ENCODE measurements at regions of chr5 and their contacts with region 1.

Region 1: DNA sequence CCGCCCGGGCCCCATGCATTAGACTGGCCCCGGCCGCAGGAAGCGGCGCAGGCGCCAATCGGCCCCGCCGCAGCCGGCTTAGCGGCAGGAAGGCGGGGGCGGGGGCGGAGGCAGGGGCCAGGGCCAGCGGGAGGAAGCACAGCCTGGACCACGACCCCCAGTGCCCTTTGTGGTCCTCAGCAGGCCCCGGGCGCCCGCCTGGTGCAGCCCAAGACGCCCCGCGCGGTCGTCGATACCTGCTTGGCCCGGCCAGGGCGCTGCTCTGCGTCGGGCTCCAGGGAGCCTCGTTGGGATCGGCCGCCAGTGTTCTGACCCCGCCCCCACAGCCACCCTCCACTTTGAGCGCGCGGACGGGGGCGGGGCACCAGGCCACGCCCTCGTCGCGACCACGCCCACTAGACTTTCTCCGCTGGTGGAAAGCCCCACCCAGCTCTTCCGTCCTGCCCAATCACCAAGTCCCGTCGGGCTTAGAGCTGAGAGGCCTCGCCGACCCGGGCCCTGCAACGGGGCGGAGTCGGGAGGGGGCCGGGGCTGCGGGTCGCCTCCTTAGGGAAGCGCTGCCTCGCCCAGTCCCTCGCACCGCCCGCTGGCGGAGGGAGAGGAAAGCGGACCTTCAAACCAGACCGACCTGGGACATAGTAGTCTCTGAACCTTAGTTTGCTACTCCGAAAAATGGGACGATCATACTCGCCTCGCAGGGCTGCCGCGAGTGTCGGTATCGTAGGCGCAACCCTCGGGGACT is at the start of gene PDLIM7:
- DNase-seq: peak; percentile 96
- H3K4me3 ChIP-seq: peak within 1 kb of the TSS; percentile 51
- H3K27ac ChIP-seq: peak within 1 kb of the TSS; percentile 79
- H3K4me1 ChIP-seq: peaks cover 10% of the 10 kb centered on the region
- H3K27me3 ChIP-seq: no peaks in the 10 kb centered on the region
- CTCF ChIP-seq: no peak
- total RNA-seq, gene PDLIM7: 19.7 to 44.9 TPM

Region 2: DNA sequence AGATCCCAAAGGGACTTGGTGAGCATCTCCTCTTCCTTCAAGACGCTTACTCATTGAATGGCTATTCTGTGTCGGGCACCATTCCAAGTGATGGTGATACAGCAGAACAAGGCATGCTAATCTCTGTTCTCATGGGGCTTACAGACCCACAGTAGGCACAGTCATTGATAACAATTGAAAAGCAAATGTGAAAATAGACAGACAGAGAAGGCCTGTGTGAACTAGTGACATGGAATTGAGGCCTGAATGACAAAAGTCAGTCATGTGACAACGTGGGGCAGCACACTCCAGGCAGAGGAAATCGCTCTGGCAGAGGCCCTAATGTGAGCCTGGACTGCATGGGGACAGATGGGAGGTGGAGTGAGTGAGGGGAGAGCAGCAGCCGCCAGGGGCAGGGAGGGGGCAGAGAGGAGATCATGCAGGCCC is 1696.8 kb before region 1 on chr5:
- intact Hi-C with region 1: no loop called
- DNase-seq: no peak
- H3K4me3 ChIP-seq: no peak overlapping the region
- H3K27ac ChIP-seq: no peak overlapping the region
- H3K4me1 ChIP-seq: no peaks in the 10 kb centered on the region
- H3K27me3 ChIP-seq: peaks cover 27% of the 10 kb centered on the region
- CTCF ChIP-seq: no peak

Region 3: DNA sequence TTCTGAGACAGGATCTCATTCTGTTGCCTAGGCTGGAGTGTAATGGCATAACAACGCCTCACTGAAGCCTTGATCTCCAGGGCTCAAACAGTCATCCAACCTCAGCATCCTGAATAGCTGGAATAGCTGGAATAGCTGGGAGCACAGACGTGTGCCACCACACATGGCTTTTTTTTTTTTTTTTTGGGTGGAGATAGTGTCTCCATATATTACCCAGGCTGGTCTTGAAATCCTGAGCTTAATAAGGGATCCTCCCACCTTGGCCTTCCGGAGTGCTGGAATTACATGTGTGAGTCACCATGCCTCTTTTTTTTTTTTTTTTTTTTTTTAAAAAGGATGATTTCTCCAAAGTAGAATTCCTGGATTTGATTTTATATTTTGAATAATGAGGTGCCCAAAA is 303.2 kb before region 1 on chr5:
- intact Hi-C with region 1: no loop called
- DNase-seq: no peak
- H3K4me3 ChIP-seq: no peak overlapping the region
- H3K27ac ChIP-seq: no peak overlapping the region
- H3K4me1 ChIP-seq: no peaks in the 10 kb centered on the region
- H3K27me3 ChIP-seq: no peaks in the 10 kb centered on the region
- CTCF ChIP-seq: no peak

Region 4: GRCh38 chr5:177311723-177312648 is 185.5 kb before region 1 on chr5 and contains the start of gene MXD3:
- intact Hi-C with region 1: loop called (anchors 5 kb)
- DNase-seq: peak; percentile 97
- H3K4me3 ChIP-seq: peak within 1 kb of the TSS; percentile 56
- H3K27ac ChIP-seq: peak within 1 kb of the TSS; percentile 41
- H3K4me1 ChIP-seq: peaks cover 32% of the 10 kb centered on the region
- H3K27me3 ChIP-seq: no peaks in the 10 kb centered on the region
- CTCF ChIP-seq: no peak
- total RNA-seq, gene MXD3: 9.3 to 36.4 TPM

Region 5: DNA sequence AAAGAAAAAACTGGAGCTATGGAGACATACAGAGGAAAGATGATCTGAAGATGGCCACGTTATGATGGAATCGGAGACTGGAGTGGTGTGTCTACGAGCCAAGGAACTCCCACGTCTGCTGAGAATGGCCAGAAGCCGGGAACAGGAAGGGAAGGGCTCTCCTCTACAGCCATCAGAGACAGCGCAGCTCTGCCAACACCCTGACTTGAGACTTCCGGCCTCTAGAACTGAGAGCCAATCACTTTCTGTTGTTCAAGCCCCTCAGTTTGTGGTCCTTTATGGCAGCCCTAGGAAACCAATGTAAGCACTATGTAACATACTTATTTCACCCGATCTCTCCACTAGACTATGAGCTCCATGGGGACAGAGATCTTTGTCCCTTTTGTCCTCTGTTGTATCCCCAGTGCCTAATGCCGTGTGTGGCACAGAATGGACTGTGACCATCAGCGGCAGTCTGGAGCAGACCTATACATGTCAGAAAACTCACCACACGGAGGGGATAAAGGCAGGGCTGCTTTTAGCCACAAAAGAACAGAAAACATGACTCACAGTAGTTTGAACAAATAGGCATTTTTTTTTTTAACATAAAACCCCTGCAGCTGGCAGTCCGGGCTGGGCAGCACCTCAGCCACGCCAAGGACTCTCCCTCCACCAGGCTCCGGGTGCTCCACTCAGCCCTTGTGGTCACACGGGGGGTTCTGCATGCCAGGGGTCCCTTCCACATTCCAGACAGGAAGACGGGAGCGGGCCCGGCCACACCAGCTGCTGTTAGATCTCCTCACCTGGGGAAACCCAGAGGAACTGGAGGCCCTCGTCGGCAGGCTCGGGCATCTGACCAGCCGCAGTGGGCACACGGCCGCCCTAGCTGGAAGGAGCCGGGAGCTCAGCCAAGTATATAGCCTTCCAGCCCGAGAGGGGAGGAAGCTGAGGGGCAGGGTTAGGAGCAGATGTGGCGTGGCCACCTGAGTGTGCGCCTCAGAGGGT is 169.6 kb before region 1 on chr5:
- intact Hi-C with region 1: no loop called
- DNase-seq: no peak
- H3K4me3 ChIP-seq: no peak overlapping the region
- H3K27ac ChIP-seq: no peak overlapping the region
- H3K4me1 ChIP-seq: no peaks in the 10 kb centered on the region
- H3K27me3 ChIP-seq: no peaks in the 10 kb centered on the region
- CTCF ChIP-seq: no peak

Region 6: DNA sequence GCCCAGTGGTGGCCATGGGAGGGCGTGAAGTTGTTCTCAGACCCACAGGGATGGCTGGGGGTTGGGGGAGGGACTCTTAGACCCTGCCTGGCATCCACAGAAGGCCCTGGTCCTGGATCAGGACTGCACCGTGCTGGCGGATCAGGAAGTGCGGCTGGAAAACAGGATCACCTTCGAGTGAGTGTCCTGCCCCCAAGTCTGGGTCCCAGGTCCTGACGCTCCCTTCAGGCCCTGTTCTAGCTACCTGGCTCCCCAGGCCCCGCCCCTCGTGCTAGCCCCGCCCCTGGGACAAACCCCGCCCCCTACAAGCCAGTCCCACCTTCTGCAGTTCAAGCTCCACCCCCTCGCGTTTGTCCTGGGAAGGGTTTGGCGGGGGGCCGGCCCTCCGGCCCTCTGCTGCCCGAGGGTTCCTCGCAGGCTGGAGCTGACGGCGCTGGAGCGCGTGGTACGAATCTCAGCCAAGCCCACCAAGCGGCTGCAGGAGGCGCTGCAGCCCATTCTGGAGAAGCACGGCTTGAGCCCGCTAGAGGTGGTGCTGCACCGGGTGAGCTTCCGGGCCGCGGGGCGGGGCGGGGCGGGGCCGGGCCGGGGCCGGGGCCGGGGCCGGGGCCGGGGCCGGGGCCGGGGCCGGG is 126.9 kb before region 1 on chr5:
- intact Hi-C with region 1: no loop called
- DNase-seq: peak; percentile 91
- H3K4me3 ChIP-seq: peak overlapping the region; percentile 31
- H3K27ac ChIP-seq: no peak overlapping the region
- H3K4me1 ChIP-seq: peaks cover 10% of the 10 kb centered on the region
- H3K27me3 ChIP-seq: no peaks in the 10 kb centered on the region
- CTCF ChIP-seq: no peak

Region 7: DNA sequence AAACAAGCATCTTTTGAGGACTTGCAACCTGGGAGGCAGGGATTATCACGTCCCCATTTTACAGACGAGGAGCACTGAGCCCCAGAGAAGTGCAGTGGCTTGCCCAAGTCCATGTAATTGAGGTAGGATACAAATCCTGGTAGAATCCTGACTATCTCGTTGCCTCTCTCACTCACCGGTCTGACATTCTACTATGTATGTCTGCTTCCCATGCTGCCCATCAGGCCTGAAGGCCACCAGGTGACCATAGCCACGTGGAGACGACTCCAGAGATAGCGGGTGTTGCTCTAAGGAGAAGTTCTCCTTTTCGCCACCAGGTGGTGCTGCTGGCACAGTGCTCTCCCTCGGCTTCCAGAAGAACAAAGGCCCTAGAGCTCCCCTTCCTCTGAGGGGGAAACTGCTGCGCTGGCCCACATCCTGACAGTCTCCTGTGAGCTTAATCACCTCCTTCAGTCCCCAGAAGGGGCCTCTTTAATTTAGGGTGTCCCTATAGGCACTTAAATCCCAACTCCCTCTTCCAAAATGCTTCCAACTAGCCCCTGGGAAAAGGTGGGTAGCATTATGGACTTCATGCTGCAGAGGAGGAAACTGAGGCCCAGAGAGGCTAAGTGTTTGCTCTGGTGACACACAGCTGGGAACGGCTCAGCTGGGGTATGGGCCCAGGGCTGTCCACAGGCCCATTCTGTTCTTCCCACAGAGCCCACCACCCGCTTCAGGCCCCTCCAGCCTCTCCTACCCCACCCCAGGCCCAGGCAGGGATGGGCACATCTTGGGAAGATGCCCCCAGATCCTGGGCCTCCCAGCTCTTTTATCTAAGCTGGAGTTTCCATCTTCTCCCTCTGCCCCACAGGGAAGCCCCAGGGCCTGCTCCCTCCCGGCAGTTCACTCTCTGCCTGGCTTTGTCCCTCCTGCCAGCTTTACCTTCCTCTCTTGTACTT is 106.8 kb before region 1 on chr5:
- intact Hi-C with region 1: loop called (anchors 5 kb)
- DNase-seq: peak; percentile 90
- H3K4me3 ChIP-seq: no peak overlapping the region
- H3K27ac ChIP-seq: peak overlapping the region; percentile 11
- H3K4me1 ChIP-seq: peaks cover 9% of the 10 kb centered on the region
- H3K27me3 ChIP-seq: no peaks in the 10 kb centered on the region
- CTCF ChIP-seq: peak; percentile 99

Region 8: DNA sequence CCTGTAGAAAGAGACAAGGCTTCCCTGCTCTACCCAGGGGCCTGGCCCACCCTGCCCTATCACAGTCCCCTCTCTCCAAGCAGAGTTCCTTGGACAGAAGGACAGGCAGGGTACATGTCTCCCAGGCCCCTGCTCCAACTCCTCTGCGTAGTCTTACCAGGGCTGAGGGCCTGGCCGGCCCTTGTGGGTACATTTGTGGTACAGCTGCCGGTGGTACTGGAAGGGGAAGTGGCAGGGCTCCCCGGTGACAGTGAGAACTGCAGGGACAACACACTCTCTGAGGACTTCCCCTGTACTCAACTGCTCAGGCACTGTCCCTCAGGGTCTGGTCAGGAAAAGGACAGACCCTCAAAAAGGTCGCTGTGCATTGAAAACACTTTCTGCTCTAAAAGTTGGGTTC is 91.7 kb before region 1 on chr5:
- intact Hi-C with region 1: loop called (anchors 5 kb)
- DNase-seq: no peak
- H3K4me3 ChIP-seq: no peak overlapping the region
- H3K27ac ChIP-seq: no peak overlapping the region
- H3K4me1 ChIP-seq: peaks cover 23% of the 10 kb centered on the region
- H3K27me3 ChIP-seq: peaks cover 5% of the 10 kb centered on the region
- CTCF ChIP-seq: no peak

Region 9: DNA sequence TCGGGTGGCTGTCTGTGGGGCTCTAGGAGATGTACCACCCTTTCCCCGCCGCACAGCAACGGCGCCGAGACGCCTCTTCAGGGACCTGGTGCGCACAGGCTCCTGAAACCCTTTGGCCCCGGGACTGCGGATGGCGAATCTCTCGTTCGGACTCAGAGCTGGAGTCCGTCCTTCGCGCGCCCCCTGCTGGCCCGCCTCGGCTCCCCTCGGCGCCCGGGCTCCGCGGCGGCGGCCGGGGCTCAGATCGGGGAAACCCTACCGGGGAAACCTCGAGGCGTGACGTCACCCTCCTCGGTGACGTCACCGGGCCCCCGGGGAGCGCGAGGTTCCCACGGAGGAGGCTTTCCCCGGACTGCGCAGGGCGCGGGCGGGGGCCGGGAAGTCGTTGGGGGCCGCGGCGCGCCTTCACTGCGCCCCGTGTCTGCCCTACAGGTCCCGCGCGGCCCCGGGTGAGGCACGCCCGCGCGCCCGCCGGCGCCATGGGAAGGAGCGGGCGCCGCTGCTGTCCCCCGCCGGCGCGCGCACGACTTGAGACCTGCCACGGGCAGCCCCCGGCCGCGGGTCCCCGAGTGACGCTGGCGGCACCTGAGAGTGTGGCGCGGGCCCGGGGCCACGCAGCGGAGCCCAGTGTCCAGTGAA is 42.9 kb before region 1 on chr5:
- intact Hi-C with region 1: loop called (anchors 5 kb)
- DNase-seq: peak; percentile 95
- H3K4me3 ChIP-seq: peak overlapping the region; percentile 52
- H3K27ac ChIP-seq: peak overlapping the region; percentile 82
- H3K4me1 ChIP-seq: peaks cover 7% of the 10 kb centered on the region
- H3K27me3 ChIP-seq: no peaks in the 10 kb centered on the region
- CTCF ChIP-seq: peak; percentile 84